GM12878 (cell line): ENCODE measurements at regions of chr12 and their contacts with region 1.

Region 1: DNA sequence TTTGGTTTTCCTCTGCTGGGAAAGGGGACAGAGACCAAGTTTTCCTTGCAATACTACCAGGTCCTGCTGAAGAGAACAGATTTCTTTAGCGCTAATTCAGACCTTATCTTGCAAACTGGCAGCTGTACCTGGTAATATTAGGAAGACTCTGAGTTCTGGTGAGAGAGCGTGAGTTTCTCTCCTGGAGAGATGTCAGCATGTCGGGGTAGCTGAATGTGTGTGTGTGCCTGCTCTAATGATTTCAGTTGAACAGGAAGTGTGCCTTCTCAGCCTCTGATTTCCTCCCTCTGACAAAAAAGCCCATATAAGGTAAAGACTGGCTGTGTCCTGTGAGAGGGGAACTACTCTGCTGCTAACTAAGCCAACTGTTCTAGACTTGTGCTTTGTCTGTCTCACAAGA is 10.3 kb upstream of the ERP27 start:
- DNase-seq: peak; percentile 90
- ATAC-seq: peak; percentile 84
- H3K4me3 ChIP-seq: peak overlapping the region; percentile 57
- H3K27ac ChIP-seq: peak overlapping the region; percentile 100
- H3K4me1 ChIP-seq: peaks cover 46% of the 10 kb centered on the region
- H3K27me3 ChIP-seq: no peaks in the 10 kb centered on the region
- CTCF ChIP-seq: no peak
- EP300 ChIP-seq: peak; percentile 16 to 42; a peak in 2 of 4 replicates
- POLR2A ChIP-seq: peak; percentile 79
- RAD21 ChIP-seq: no peak

Region 2: DNA sequence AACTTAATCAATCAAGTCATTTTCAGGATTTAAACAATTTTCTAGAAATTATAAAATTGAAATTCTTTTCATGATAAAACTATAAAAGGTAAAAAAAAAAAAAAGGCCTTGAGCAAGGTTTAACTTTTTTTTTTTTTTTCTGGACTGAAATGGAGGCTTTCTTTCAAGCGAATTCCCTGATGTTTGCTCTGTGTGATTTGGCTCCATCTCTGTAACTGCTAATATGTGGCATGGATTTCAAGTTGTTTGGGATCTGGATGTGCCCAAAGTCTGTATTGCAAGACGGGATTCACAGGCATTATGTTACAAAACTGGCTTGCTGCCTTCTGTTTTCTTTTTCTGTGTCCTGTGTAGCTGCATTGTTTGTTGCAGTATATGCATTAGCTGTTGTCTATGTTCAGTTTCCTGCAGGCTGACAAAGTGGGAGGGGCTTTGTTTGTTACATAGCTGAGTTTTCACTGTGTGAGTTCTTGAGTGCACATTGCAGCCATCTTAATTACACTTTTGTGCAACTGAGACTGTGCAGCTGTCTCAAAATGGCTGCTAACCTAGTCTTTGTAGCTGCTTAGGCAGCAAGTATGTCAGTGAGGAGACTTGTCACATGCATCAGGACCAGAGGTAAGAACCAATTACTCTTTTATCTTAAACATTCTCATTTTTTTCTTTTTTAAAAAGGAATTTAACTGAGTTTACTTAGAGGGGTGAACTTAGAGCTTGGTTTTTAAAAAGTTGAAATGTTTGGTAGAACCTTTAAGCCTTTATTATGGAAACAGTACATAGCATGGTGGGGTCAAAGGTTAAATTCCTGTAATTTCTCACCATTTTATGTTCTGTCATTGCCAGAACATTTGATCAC is 563.7 kb before region 1 on chr12:
- CTCF ChIA-PET with region 1: no interaction called
- POLR2A ChIA-PET with region 1: no interaction called
- RAD21 ChIA-PET with region 1: no interaction called
- SMC1A ChIA-PET with region 1: no interaction called
- in situ Hi-C with region 1: loop called (anchors 25 kb)
- intact Hi-C with region 1: no loop called
- DNase-seq: peak; percentile 92
- ATAC-seq: peak; percentile 90
- H3K4me3 ChIP-seq: peak overlapping the region; percentile 18; the same call in 1 of the 2 replicates
- H3K27ac ChIP-seq: peak overlapping the region; percentile 63
- H3K4me1 ChIP-seq: peaks cover 5% of the 10 kb centered on the region
- H3K27me3 ChIP-seq: no peaks in the 10 kb centered on the region
- CTCF ChIP-seq: no peak
- EP300 ChIP-seq: no peak; a peak in 1 of 4 replicates
- POLR2A ChIP-seq: peak; percentile 46; the same call in 1 of the 2 replicates
- RAD21 ChIP-seq: no peak

Region 3: DNA sequence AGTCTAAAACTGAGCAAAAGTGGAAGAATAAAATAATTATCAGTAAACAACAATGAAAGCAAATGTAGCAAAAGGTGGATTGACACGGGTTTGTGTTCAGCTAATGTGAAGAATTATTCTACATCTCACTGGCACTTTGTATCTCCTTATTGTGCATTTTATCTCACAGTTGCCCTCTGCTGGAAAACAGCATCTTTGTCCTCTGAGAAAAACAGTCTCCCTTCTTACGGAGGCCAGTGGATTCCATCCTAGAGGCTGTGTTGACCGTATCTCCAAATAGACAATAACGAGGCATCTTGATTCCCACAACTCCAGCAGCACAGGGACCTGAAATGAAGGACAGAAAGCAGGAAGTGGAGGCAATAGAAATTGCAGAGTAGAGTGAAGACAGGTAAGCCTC is 329.7 kb before region 1 on chr12:
- CTCF ChIA-PET with region 1: no interaction called
- POLR2A ChIA-PET with region 1: interaction called, 5 read pairs
- RAD21 ChIA-PET with region 1: no interaction called
- SMC1A ChIA-PET with region 1: no interaction called
- in situ Hi-C with region 1: loop called (anchors 10 kb)
- intact Hi-C with region 1: loop called (anchors 10 kb)
- DNase-seq: no peak
- ATAC-seq: no peak
- H3K4me3 ChIP-seq: no peak overlapping the region
- H3K27ac ChIP-seq: no peak overlapping the region
- H3K4me1 ChIP-seq: peaks cover 23% of the 10 kb centered on the region
- H3K27me3 ChIP-seq: no peaks in the 10 kb centered on the region
- CTCF ChIP-seq: 0 out of 6 replicates have a peak, but pooled peaks of 1 of the 3 experiments have one; percentile 16
- EP300 ChIP-seq: no peak
- POLR2A ChIP-seq: no peak
- RAD21 ChIP-seq: peak; percentile 48

Region 4: GRCh38 chr12:14824012-14824634 is 124.5 kb before region 1 on chr12:
- CTCF ChIA-PET with region 1: no interaction called
- POLR2A ChIA-PET with region 1: no interaction called
- RAD21 ChIA-PET with region 1: no interaction called
- SMC1A ChIA-PET with region 1: no interaction called
- in situ Hi-C with region 1: no loop called
- intact Hi-C with region 1: no loop called
- DNase-seq: no peak
- ATAC-seq: no peak
- H3K4me3 ChIP-seq: no peak overlapping the region
- H3K27ac ChIP-seq: no peak overlapping the region
- H3K4me1 ChIP-seq: no peaks in the 10 kb centered on the region
- H3K27me3 ChIP-seq: no peaks in the 10 kb centered on the region
- CTCF ChIP-seq: no peak
- EP300 ChIP-seq: no peak
- POLR2A ChIP-seq: no peak
- RAD21 ChIP-seq: no peak

Region 5: DNA sequence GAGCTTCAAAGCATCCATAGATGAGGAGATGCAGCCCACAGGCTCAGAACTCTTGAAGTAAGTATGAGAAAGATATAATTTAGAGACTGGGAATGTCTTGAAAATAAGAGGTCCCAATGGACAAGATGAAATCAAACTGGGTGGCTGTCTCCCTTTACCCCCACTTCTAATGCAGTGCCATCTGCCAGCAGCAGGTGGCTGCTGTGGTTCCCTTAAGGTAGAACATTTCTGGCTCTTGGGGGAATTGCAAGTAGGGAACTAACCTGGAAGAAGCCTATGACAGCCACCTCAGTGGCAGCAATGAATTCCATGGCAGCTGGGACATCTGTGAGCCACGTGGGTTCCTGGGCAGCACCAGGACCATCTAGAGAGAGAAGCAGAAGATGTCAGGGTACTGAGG is 11.0 kb before region 1 on chr12:
- CTCF ChIA-PET with region 1: interaction called, 4 read pairs
- POLR2A ChIA-PET with region 1: interaction called, 6 read pairs
- RAD21 ChIA-PET with region 1: no interaction called
- SMC1A ChIA-PET with region 1: interaction called, 18 read pairs
- in situ Hi-C with region 1: no loop called
- intact Hi-C with region 1: no loop called
- DNase-seq: no peak
- ATAC-seq: peak; percentile 74
- H3K4me3 ChIP-seq: no peak overlapping the region
- H3K27ac ChIP-seq: no peak overlapping the region
- H3K4me1 ChIP-seq: no peaks in the 10 kb centered on the region; the same call in 1 of the 2 replicates
- H3K27me3 ChIP-seq: no peaks in the 10 kb centered on the region
- CTCF ChIP-seq: peak; percentile 34 to 43 (median 37); a peak in 5 of 6 replicates
- EP300 ChIP-seq: no peak
- POLR2A ChIP-seq: no peak
- RAD21 ChIP-seq: peak; percentile 52

Region 6: GRCh38 chr12:14981049-14981448 is 32.4 kb after region 1 on chr12:
- CTCF ChIA-PET with region 1: interaction called, 3 read pairs
- POLR2A ChIA-PET with region 1: interaction called, 10 read pairs
- RAD21 ChIA-PET with region 1: interaction called, 7 read pairs
- SMC1A ChIA-PET with region 1: interaction called, 7 read pairs
- in situ Hi-C with region 1: no loop called
- intact Hi-C with region 1: loop called (anchors 5 kb)
- DNase-seq: no peak
- ATAC-seq: peak; percentile 81
- H3K4me3 ChIP-seq: no peak overlapping the region
- H3K27ac ChIP-seq: no peak overlapping the region
- H3K4me1 ChIP-seq: peaks cover 11% of the 10 kb centered on the region
- H3K27me3 ChIP-seq: no peaks in the 10 kb centered on the region
- CTCF ChIP-seq: no peak
- EP300 ChIP-seq: no peak
- POLR2A ChIP-seq: no peak
- RAD21 ChIP-seq: no peak

Region 7: GRCh38 chr12:15789220-15790171 is 840.8 kb after region 1 on chr12 and contains the start of gene EPS8:
- CTCF ChIA-PET with region 1: no interaction called
- POLR2A ChIA-PET with region 1: no interaction called
- RAD21 ChIA-PET with region 1: no interaction called
- SMC1A ChIA-PET with region 1: no interaction called
- in situ Hi-C with region 1: no loop called
- intact Hi-C with region 1: loop called (anchors 10 kb)
- DNase-seq: peak; percentile 50
- ATAC-seq: peak; percentile 87
- H3K4me3 ChIP-seq: peak within 1 kb of the TSS; percentile 79
- H3K27ac ChIP-seq: no peak within 1 kb of the TSS
- H3K4me1 ChIP-seq: no peaks in the 10 kb centered on the region
- H3K27me3 ChIP-seq: peaks cover 0 to 8% of the 10 kb centered on the region in 2 experiments; a peak in 2 of 4 replicates
- CTCF ChIP-seq: no peak
- EP300 ChIP-seq: 0 out of 4 replicates have a peak, but pooled peaks of 1 of the 2 experiments have one; percentile 18
- POLR2A ChIP-seq: peak; percentile 61; the same call in 1 of the 2 replicates
- RAD21 ChIP-seq: no peak
- polyA plus RNA-seq, gene EPS8: 1.3 to 1.6 TPM